Tibial artery (tissue), 4 donors: ENCODE measurements at regions of chr1 and their contacts with region 1.

Region 1: DNA sequence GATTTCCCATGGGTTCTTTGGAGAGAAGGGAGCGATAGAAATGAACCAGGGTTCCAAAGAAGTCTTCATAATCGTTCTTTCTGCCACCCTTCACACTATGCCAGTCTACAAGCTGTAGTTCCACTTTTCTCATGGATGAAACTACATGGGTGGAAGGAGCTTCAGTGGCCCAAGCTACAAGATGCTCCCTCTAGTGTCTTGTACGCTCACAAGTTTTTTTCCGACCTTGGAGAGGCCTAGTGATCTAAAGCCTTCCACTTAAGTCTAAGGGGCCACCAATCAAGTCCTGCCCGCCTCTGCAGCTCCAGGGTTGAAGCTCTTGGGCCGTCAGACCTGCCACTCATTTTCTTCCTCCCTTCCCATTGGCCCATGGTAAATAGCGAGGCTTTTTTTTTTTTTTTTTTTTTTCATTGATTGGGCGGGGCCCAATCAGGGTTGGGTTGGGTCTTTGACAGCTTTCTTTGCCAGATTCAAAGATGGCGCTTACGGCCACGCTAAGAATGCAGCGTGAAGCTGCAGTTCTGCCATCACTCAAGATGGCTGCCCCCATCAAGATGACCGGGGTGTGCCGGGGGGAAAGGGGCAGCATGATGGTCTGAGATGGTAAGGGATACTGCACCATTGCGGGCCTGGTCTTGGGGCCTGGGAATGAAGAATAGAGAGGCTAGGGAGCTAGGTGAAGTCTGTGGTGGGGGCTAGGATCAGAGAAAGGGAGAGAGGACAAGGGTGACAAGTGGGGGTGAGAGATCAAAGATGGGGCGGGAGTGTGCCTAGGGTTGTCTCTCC is at the start of gene TOMM40L:
- DNase-seq: peak; percentile 93 to 95
- H3K4me3 ChIP-seq: peak within 1 kb of the TSS; percentile 57 to 68
- H3K27ac ChIP-seq: peak within 1 kb of the TSS; percentile 63 to 64
- H3K4me1 ChIP-seq: peaks cover 0 to 22% (median 13%) of the 10 kb centered on the region in 4 donors
- H3K27me3 ChIP-seq: no peaks in the 10 kb centered on the region
- CTCF ChIP-seq: peak; percentile 25 to 35

Region 2: GRCh38 chr1:161305867-161306519 is 80.3 kb after region 1 on chr1:
- intact Hi-C with region 1: loop called (anchors 5 kb)
- DNase-seq: peak; percentile 66 to 76
- H3K4me3 ChIP-seq: peak overlapping the region; percentile 53 to 66
- H3K27ac ChIP-seq: peak overlapping the region; percentile 26 to 41
- H3K4me1 ChIP-seq: peaks cover 0 to 17% (median 14%) of the 10 kb centered on the region in 4 donors
- H3K27me3 ChIP-seq: peaks cover 0 to 28% of the 10 kb centered on the region in 2 donors
- CTCF ChIP-seq: no peak

Region 3: DNA sequence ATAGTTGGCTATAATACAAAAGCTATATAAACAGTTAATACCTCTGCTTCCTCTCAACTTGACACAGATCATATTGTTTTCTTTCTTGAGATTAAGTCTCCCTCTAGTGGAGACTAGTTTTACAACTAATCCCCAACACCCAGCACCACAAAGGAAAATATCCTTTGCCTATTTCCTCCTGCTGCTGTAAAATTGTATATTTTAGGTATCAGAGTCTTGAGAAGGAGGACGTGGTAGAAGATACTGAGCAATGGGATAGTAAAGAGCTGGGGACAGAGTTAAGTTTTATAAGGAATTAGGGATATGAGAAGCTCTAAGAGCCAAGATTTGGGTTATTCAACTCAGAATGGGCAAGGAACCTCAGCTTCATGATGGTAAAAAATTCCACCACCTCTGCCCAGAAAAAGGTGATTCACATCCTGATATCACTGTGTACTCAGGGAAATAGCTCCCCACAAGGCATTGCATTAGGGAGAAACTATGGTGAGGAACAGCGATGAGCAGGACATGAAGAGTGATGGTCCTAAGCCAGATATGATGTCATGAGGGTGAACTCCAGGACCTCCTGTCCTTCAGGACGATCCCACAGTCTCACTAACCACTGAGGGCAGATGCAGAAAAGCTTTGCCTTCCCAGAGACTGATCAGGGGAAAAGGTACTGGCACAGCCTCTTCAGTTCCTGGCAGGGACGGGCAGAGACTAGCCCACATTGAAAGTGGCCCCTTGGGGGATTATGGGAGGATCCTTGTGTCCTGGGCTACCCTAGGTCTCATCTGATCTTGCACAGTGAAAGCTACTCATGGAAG is 156.7 kb after region 1 on chr1:
- intact Hi-C with region 1: loop called (anchors 5 kb)
- DNase-seq: no peak
- H3K4me3 ChIP-seq: no peak overlapping the region
- H3K27ac ChIP-seq: peak overlapping the region in 1 of 2 donors; percentile 55
- H3K4me1 ChIP-seq: no peaks in the 10 kb centered on the region
- H3K27me3 ChIP-seq: no peaks in the 10 kb centered on the region
- CTCF ChIP-seq: peak; percentile 59